ENCODE measurements at regions of chr7 and their contacts with region 1.

Region 1: GRCh38 chr7:92781117-92781720 is 55.2 kb downstream of the CDK6 start:
- DNase-seq: no peak
- CTCF ChIP-seq: no peak

Region 2: GRCh38 chr7:92768501-92769393 is 12.5 kb before region 1 on chr7:
- CTCF ChIA-PET with region 1: interaction called, 10 read pairs
- POLR2A ChIA-PET with region 1: no interaction called
- DNase-seq: peak; percentile 36
- CTCF ChIP-seq: no peak

Region 3: DNA sequence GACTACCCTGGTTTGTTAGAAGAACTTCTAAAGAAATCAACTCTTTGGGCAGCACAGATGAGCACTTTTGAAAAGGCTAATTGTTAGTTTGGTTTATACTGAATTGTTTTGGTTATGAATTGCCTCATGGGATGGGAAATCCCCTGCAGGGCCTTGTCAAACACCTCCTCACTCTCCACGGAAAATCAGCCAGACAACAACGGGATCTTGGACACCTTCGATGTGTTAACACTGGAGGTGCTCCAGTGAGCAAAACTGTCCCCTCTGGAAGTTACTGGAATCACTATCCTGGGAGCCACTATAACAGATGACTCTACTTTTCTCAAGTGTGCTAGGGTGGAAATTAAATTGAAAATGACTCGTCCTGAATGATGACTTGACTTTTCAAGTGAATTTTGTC is 16.5 kb after region 1 on chr7:
- CTCF ChIA-PET with region 1: interaction called, 10 read pairs
- POLR2A ChIA-PET with region 1: no interaction called
- DNase-seq: peak; percentile 13
- CTCF ChIP-seq: no peak